Dorsolateral prefrontal cortex (tissue), 120 donors: ENCODE measurements at regions of chr3 and their contacts with region 1.

Region 1: DNA sequence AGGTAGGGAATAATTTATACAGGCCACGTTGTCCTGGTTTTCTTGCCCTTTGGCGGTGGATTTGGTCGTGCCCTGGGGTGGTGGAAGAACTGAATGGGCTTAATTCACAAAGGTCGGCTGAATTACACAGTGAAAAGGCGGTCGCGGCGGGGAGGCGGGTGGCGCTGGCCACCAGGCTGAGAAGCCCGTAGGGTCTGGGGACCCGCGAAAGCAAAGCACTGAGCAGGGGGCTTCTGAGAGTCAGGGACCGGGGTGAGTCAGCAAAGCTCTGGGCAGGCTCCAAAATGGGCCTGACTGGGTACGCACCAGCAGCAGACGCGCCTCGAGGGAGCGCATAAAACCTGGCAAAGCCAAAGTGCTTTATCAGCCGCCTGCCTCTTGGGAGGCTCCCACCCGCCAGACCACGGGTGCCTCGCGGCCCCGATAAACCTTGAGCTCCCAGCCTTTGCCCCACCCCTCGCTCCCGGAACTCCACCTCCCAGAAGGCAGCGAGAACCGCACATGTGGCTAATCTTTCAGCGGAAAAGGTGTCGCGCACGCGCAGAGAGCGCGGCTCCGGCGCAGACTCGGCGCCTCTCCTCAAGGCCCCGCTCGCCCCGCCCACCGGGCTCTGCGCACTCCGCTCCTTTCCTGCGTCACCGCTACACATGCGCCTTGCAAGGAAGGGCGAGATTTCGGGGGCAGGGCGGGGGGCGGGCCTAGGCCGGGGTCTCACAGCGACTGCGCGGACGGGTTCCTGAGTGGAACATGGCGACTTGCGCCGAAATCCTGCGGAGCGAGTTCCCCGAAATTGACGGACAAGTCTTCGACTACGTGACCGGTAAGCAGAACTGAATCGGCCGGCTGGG is at the start of gene ABCF3:
- DNase-seq: peak; percentile 97 to 99 (median 98)
- H3K4me3 ChIP-seq: peak within 1 kb of the TSS; percentile 62 to 100 (median 96)
- H3K27ac ChIP-seq: peak within 1 kb of the TSS; percentile 54 to 96 (median 89)
- H3K27me3 ChIP-seq: no peaks in the 10 kb centered on the region
- CTCF ChIP-seq: peak in 23 of 56 donors; percentile 3 to 46 (median 23)
- total RNA-seq, gene ABCF3: 72.1 to 140 (median 98.1) TPM

Region 2: DNA sequence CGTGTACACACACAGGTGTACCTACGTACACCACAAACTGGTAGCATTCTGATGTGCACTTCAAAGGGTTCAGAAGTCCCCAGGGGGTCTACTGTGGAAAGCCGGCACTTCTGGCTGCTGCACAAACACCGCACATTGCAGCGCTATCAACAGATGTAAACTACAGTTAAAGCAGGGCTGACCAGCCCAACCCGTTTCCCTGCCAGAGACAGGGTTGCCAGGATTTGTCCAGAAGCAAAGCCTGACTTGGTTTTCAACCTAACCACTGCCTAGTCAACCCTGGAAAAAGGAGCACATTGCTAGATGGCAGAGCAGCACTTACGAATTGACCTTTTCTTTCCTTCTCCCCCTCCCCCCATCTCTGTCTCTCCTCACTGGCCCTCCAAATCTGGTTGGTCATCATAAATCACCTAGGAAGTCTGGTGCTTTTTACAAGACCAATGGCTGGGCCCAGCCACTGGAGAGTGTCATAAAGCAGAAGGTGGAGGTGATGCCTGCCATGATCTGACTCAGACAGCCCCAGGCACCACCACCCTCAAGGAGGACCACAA is 219.4 kb before region 1 on chr3:
- intact Hi-C with region 1: no loop called
- DNase-seq: no peak
- H3K4me3 ChIP-seq: no peak overlapping the region
- H3K27ac ChIP-seq: no peak overlapping the region
- H3K27me3 ChIP-seq: no peaks in the 10 kb centered on the region
- CTCF ChIP-seq: no peak

Region 3: GRCh38 chr3:184022323-184022722 is 163.4 kb before region 1 on chr3:
- intact Hi-C with region 1: no loop called
- DNase-seq: no peak
- H3K4me3 ChIP-seq: no peak overlapping the region
- H3K27ac ChIP-seq: no peak overlapping the region
- H3K27me3 ChIP-seq: no peaks in the 10 kb centered on the region
- CTCF ChIP-seq: no peak

Region 4: DNA sequence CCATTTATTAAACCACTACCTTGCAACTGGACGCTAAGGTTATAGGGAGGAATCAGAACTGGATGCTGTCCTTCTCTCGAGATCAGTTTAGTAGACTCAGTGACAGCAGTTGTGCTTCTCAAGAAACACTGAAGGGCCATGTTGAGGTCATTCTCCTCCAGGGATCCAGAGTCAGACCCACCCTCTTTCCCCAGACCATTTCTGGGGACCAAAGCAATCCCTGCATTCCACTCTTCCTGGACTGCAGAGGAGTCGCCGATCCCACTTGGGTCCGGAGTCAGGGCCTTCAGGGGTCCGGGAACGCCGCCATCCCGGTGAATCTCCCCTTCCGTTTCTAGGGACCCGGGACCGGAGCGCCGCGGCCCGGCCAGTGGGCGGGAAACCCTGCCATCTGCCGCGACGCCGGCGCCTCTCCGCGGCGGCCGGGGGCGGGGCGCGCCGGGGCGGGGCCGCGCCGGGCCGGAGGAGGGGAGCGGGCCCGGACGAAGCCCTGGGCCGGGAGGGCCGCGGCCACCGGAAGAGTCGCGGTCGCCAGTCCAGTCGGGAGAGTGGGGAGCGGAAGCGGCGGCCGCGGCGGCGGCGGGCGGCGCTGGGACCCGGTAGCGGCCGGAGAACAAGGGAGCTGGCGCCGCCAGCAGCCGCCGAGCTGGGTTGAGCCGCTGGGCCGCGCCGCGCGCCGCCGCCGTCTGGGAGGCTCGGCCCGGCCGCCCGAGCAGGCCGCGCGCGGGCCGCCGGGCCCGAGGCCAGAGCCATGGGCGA is 30.6 kb before region 1 on chr3 and contains the start of gene DVL3:
- intact Hi-C with region 1: loop called in 1 of 2 experiments (anchors 1 kb)
- DNase-seq: peak in 9 of 10 donors; percentile 46 to 82 (median 57)
- H3K4me3 ChIP-seq: peak within 1 kb of the TSS; percentile 72 to 97 (median 91)
- H3K27ac ChIP-seq: peak within 1 kb of the TSS; percentile 78 to 98 (median 95)
- H3K27me3 ChIP-seq: no peaks in the 10 kb centered on the region
- CTCF ChIP-seq: peak in 3 of 56 donors; percentile 19 to 31 (median 21)
- total RNA-seq, gene DVL3: 48.6 to 82.7 (median 65.1) TPM

Region 5: GRCh38 chr3:184174646-184175492 is 10.8 kb before region 1 on chr3 and contains the start of gene AP2M1:
- intact Hi-C with region 1: loop called (anchors 1 kb)
- DNase-seq: peak; percentile 96 to 100 (median 99)
- H3K4me3 ChIP-seq: peak within 1 kb of the TSS; percentile 75 to 100 (median 99)
- H3K27ac ChIP-seq: peak within 1 kb of the TSS; percentile 61 to 99 (median 95)
- H3K27me3 ChIP-seq: no peaks in the 10 kb centered on the region
- CTCF ChIP-seq: peak in 23 of 56 donors; percentile 2 to 51 (median 18)
- total RNA-seq, gene AP2M1: 297 to 743 (median 543) TPM

Region 6: DNA sequence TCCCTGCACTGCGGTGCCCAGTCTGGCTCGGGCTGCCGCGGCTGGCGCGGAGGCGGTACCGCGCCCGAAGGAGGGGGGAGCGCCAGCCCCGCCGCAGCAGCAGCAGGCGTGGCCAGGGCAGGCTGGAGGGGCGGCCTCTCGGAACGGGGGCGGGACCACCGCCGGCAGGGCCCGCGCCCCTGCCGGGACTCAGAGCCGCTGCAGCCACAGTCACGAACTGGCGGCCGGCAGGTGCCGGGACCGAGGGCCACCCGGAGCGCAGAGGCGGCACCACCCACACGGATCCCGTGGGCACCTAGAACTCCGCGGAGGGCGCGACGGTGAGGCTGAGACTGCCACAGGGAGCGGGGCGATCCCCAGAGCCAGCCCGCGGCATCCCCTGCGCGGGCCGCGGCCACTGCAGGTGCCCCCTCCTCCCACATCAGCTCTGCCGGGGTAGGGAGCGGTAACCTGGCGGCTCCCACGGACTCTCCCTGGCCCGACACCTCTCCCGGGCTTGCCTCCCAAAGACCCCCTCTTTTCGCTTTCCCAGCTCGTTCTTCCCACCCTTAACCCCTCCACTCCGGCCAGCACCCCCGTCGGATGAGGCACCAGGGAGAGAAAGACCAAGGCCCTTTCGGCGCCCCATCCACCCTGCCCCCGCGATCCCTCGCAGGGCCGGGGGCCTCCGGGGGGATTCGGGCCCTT is 43.9 kb after region 1 on chr3 and contains the start of gene VWA5B2:
- intact Hi-C with region 1: loop called in 1 of 2 experiments (anchors 5 kb)
- DNase-seq: peak in 9 of 10 donors; percentile 40 to 82 (median 66)
- H3K4me3 ChIP-seq: peak within 1 kb of the TSS; percentile 48 to 80 (median 68)
- H3K27ac ChIP-seq: peak within 1 kb of the TSS in 48 of 59 donors; percentile 3 to 89 (median 63)
- H3K27me3 ChIP-seq: peaks cover 0 to 25% (median 3%) of the 10 kb centered on the region in 45 donors
- CTCF ChIP-seq: peak in 12 of 56 donors; percentile 7 to 25 (median 15)
- total RNA-seq, gene VWA5B2: 22.0 to 127 (median 48.6) TPM

Region 7: DNA sequence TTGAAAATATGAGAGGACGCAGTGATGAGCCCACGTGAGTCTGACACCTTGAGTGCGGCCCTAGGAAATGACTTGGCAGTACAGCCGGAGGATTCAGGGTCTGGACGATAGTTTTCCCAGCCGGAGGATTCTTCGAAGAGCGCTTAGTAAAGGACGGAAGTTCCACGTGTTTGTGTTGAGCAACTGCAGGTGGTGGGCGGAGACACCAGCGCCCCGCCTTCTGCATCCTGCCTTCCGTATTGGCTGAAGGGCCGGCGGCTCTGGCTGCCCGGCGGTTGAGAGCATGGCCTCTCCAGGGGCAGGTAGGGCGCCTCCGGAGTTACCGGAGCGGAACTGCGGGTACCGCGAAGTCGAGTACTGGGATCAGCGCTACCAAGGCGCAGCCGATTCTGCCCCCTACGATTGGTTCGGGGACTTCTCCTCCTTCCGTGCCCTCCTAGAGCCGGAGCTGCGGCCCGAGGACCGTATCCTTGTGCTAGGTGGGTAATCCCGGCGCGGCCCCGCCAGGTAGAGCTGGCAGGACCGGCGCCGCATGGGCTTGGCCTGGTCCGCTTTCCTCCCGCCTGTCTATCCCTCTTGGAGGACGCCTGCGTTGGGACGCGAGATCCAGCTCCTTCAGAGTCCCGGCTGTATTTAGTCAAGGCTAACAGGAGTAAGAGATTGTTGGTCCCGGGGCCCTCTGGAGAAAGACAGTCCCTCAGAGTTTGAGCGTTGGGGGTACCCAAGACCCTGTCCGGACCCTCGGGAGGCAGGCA is 63.9 kb after region 1 on chr3 and contains the start of gene EEF1AKMT4:
- intact Hi-C with region 1: loop called (anchors 5 kb)
- DNase-seq: peak; percentile 87 to 97 (median 95)
- H3K4me3 ChIP-seq: peak within 1 kb of the TSS; percentile 54 to 100 (median 85)
- H3K27ac ChIP-seq: peak within 1 kb of the TSS; percentile 48 to 94 (median 87)
- H3K27me3 ChIP-seq: no peaks in the 10 kb centered on the region
- CTCF ChIP-seq: peak in 51 of 56 donors; percentile 25 to 71 (median 49)
- total RNA-seq, gene EEF1AKMT4: 0.25 to 1.6 (median 0.52) TPM in 80 of 120 experiments, not detected in the others